ENCODE measurements at regions of chr18 and their contacts with region 1.

Region 1: GRCh38 chr18:2932247-2933181 is 80.4 kb downstream of the LPIN2 start:
- DNase-seq: no peak

Region 2: GRCh38 chr18:2985628-2986027 is 53.1 kb after region 1 on chr18:
- intact Hi-C with region 1: loop called (anchors 10 kb)
- DNase-seq: no peak

Region 3: DNA sequence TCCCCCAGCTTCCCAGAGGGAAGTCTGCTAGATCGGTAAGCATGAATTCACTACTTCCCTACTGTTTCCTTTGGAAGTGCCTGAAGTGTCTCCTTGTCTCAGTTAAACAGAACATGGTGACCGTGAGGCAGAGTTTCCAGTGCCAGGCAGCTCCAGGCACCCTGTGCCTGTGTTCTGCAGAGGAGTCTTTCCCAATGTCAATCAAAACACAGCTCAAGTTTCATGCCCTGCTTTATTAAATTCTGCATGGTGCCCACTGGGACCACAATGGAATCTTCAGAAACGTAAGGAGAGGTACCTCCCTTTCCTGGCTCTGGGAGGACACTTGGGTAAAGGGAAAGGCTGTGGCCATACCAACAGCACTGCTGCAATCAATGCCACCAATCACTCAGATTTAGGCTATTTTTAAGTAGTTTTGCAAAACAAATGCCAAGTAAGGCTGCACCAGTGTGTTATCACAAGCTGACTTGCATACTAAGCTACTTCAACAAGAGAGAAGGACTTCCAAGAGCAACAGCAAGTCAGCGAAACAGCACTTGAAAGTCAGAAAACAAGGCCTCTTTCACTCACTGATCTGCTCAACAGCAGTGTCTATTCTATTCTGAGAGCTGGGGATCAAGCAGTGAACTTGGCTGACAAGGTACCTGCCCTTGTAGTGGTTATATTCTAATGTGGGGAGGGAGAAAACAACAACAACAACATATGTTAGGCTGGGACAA is 65.5 kb after region 1 on chr18:
- intact Hi-C with region 1: no loop called
- DNase-seq: no peak

Region 4: GRCh38 chr18:3012964-3013804 is 80.7 kb after region 1 on chr18 and contains the start of gene LPIN2:
- intact Hi-C with region 1: loop called (anchors 5 kb)
- DNase-seq: peak; percentile 90 to 99 (median 95)

Region 5: GRCh38 chr18:3062798-3063680 is 130.5 kb after region 1 on chr18:
- intact Hi-C with region 1: loop called (anchors 5 kb)
- DNase-seq: peak; percentile 31 to 94 (median 73)

Region 6: DNA sequence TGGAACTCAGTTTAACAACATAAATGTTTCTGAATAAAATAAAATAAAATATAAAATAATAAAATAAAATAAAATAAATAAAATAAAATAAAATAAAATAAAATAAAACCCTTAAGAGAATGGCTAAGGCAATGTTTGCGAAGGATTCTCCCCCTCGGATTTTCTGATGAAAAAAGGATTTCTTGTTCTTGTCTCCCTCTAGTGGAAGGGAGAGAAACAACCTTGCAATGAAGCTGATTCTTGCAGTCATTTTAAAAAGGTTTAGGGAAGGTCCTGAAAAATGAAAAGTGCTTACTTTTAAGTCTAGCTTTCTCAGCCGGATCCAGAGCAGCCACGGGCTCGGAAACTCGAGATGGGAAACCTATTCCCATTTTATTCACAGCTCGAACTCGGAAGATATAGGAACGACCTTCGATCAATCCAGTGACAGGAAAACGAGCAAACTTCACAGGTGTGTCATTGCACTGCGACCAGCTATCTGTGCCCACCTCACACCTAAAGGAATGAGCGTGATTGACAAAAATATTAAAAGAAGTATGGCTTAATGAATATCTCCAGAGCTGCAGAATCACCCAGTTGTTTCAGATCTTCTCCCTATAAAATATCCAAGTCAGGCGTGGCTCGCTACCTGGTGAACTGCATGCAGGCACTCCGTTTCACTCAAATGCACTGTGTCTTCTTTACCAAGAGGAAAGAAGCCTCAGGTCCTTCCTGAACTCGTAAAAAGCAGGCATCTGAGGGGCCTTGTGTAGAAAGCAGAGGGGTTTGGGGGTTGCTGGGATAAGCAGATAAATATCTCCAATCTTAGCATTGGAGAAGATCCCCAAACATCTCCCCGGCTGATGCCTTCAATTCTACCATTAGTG is 219.1 kb after region 1 on chr18:
- intact Hi-C with region 1: loop called (anchors 2 kb)
- DNase-seq: no peak